Endothelial cell of umbilical vein (primary cell): ENCODE measurements at regions of chr2 and their contacts with region 1.

Region 1: DNA sequence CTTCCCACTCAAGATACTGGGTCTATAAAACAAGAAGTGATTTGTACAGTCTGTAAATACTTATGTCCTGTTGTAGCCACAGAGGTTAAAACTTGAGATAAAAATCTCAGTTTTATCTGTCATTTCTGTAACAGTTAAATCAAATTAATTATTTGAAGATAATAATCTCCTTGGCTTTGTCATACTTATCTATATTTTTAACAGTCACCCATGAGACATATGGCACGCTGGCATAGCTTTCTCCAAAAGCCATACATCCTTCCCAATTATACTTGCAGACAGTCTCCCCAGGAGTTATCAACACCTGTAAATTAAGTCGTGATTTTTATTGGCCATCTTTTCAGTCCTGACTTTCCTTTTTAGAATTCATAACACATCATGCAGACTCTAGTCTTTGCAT is 68.9 kb upstream of the UNC80 start:
- DNase-seq: no peak
- H3K4me3 ChIP-seq: no peak overlapping the region
- H3K27ac ChIP-seq: no peak overlapping the region
- H3K4me1 ChIP-seq: no peaks in the 10 kb centered on the region
- H3K27me3 ChIP-seq: no peaks in the 10 kb centered on the region
- CTCF ChIP-seq: no peak
- POLR2A ChIP-seq: no peak

Region 2: GRCh38 chr2:209525834-209526281 is 176.9 kb before region 1 on chr2:
- CTCF ChIA-PET with region 1: no interaction called
- POLR2A ChIA-PET with region 1: no interaction called
- dilution Hi-C with region 1: no loop called
- intact Hi-C with region 1: no loop called
- DNase-seq: peak; percentile 91
- H3K4me3 ChIP-seq: peak overlapping the region in 1 of 3 experiments; percentile 72
- H3K27ac ChIP-seq: peak overlapping the region; percentile 99
- H3K4me1 ChIP-seq: peaks cover 37% of the 10 kb centered on the region
- H3K27me3 ChIP-seq: no peaks in the 10 kb centered on the region
- CTCF ChIP-seq: no peak
- POLR2A ChIP-seq: no peak

Region 3: GRCh38 chr2:209713219-209713618 is 10.4 kb after region 1 on chr2:
- CTCF ChIA-PET with region 1: no interaction called
- POLR2A ChIA-PET with region 1: no interaction called
- dilution Hi-C with region 1: no loop called
- intact Hi-C with region 1: loop called (anchors 1 kb)
- DNase-seq: no peak
- H3K4me3 ChIP-seq: no peak overlapping the region
- H3K27ac ChIP-seq: no peak overlapping the region
- H3K4me1 ChIP-seq: no peaks in the 10 kb centered on the region
- H3K27me3 ChIP-seq: no peaks in the 10 kb centered on the region
- CTCF ChIP-seq: no peak
- POLR2A ChIP-seq: no peak

Region 4: GRCh38 chr2:209806318-209806717 is 103.5 kb after region 1 on chr2:
- CTCF ChIA-PET with region 1: no interaction called
- POLR2A ChIA-PET with region 1: no interaction called
- dilution Hi-C with region 1: no loop called
- intact Hi-C with region 1: no loop called
- DNase-seq: no peak
- H3K4me3 ChIP-seq: no peak overlapping the region
- H3K27ac ChIP-seq: no peak overlapping the region
- H3K4me1 ChIP-seq: no peaks in the 10 kb centered on the region
- H3K27me3 ChIP-seq: no peaks in the 10 kb centered on the region
- CTCF ChIP-seq: no peak
- POLR2A ChIP-seq: no peak